ENCODE measurements at regions of chr4 and their contacts with region 1.

Region 1: GRCh38 chr4:77819843-77820648 is 878 bp upstream of the CNOT6L start:
- DNase-seq: no peak
- H3K4me3 ChIP-seq: peak overlapping the region; percentile 91
- CTCF ChIP-seq: no peak

Region 2: GRCh38 chr4:77728420-77728819 is 91.6 kb before region 1 on chr4:
- CTCF ChIA-PET with region 1: no interaction called
- POLR2A ChIA-PET with region 1: no interaction called
- DNase-seq: no peak
- H3K4me3 ChIP-seq: no peak overlapping the region
- CTCF ChIP-seq: no peak

Region 3: DNA sequence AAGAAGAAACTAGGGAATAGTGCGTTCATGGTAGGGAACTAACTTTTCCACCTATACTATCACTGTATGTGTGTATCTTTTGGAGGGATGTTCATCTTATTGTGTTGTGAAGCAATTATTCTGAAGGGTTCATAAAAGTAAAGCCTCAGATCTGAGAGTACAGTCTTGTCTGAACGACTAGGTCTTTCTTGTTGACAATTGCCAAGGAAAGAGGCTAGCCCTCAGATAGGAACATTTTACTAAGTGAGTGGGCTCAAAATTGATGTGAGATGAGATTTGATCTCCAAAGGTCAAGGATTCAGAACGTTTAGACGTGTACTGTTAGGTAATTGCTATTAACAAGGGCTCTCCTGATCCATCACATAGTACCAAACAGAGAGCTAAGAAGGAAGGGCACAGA is 14.4 kb after region 1 on chr4:
- CTCF ChIA-PET with region 1: no interaction called
- POLR2A ChIA-PET with region 1: no interaction called
- DNase-seq: no peak
- H3K4me3 ChIP-seq: no peak overlapping the region
- CTCF ChIP-seq: no peak

Region 4: DNA sequence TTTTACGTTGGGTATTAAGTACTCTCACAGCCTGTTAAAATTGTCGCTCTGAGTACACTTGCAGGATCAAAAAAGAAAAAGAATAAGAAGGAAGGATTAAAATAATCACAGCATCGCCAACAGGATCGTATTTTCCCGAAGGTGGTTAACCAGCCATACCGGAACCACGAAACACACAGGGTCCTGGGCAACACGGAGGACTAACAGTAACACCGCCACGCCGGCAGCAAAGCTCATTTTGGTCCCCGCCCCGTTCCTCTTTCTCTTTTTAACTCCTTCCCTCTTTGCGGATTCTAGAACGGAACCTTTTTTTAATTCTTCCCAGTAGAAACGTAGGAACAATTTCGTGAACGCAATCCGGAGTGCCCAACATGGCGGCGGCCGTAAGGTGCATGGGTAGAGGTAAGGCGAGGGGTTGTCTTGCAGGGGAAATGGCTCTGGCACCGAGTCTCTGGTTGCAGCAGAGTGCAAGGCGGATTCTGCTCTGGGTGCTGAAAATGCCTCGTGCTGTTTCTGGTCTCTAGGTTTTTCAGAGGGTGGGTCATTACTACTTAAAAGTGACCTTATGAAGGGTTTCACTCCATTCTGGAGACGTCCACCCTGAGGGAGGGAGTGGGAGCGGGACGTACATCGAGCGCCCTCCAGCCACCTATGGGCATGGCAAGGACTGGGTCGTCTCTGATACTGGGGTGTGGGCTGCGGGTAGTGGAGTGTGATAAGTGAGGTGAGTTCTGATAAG is 42.6 kb after region 1 on chr4 and contains the start of gene MRPL1:
- CTCF ChIA-PET with region 1: interaction called, 5 read pairs
- POLR2A ChIA-PET with region 1: interaction called, 18 read pairs
- DNase-seq: peak; percentile 79
- H3K4me3 ChIP-seq: peak within 1 kb of the TSS; percentile 97
- CTCF ChIP-seq: no peak

Measured in AG04449 (cell line).